CD8-positive, alpha-beta T cell (primary cell): ENCODE measurements at regions of chr20 and their contacts with region 1.

Region 1: DNA sequence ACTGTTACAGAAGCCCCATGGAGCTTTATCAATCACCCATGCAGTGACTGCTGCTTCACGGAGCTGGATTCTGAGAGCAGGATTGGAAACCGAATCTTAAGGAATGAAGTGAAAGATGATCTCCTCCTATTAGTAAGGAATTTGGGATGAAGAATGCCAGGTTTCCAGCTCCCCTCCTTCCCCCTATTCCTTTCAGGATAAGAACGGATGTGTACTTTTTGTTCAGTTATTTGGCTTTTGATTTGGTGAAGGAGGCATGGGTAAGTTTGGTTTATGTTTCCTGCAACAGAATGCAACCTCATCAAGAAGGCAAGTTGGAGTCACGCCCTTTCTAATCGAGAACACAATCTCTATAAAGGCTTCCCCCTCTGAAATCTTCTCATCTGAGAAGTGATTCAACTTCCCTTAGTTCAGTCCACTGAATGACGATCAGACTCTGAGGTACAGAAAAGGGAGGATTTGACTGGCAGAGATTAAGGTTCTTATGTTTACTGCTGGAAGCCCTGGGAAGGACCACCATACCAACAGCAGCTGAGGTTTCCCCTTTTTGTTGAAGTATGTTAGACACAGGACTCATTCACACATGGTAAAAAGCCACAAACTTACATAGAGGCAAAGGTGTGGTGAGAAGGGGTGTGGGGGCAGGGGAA is 5.5 kb downstream of the ELMO2 start:
- DNase-seq: peak in 7 of 9 experiments; percentile 7 to 89 (median 51)
- ATAC-seq: peak; percentile 84
- H3K4me3 ChIP-seq: peak overlapping the region; percentile 2 to 27
- H3K4me3 Mint-ChIP-seq: peak overlapping the region; percentile 70
- H3K27ac ChIP-seq: peak overlapping the region; percentile 53 to 87
- H3K27ac Mint-ChIP-seq: peak overlapping the region; percentile 92
- H3K4me1 ChIP-seq: peaks cover 67% of the 10 kb centered on the region
- H3K4me1 Mint-ChIP-seq: peaks cover 75% of the 10 kb centered on the region
- H3K27me3 ChIP-seq: no peaks in the 10 kb centered on the region
- H3K27me3 Mint-ChIP-seq: no peaks in the 10 kb centered on the region
- CTCF ChIP-seq: no peak

Region 2: GRCh38 chr20:46388937-46389336 is 12.0 kb before region 1 on chr20:
- CTCF ChIA-PET with region 1: no interaction called
- POLR2A ChIA-PET with region 1: no interaction called
- intact Hi-C with region 1: loop called in 1 of 2 experiments (anchors 2 kb)
- DNase-seq: no peak
- ATAC-seq: no peak
- H3K4me3 ChIP-seq: no peak overlapping the region
- H3K4me3 Mint-ChIP-seq: no peak overlapping the region
- H3K27ac ChIP-seq: no peak overlapping the region
- H3K27ac Mint-ChIP-seq: no peak overlapping the region
- H3K4me1 ChIP-seq: no peaks in the 10 kb centered on the region
- H3K4me1 Mint-ChIP-seq: no peaks in the 10 kb centered on the region
- H3K27me3 ChIP-seq: no peaks in the 10 kb centered on the region
- H3K27me3 Mint-ChIP-seq: no peaks in the 10 kb centered on the region
- CTCF ChIP-seq: no peak

Region 3: GRCh38 chr20:46411637-46412036 is 10.7 kb after region 1 on chr20:
- CTCF ChIA-PET with region 1: interaction called, 7 read pairs
- POLR2A ChIA-PET with region 1: no interaction called
- intact Hi-C with region 1: loop called in 1 of 2 experiments (anchors 1 kb)
- DNase-seq: no peak
- ATAC-seq: no peak
- H3K4me3 ChIP-seq: no peak overlapping the region
- H3K4me3 Mint-ChIP-seq: no peak overlapping the region
- H3K27ac ChIP-seq: no peak overlapping the region
- H3K27ac Mint-ChIP-seq: no peak overlapping the region
- H3K4me1 ChIP-seq: peaks cover 13% of the 10 kb centered on the region
- H3K4me1 Mint-ChIP-seq: peaks cover 28% of the 10 kb centered on the region
- H3K27me3 ChIP-seq: no peaks in the 10 kb centered on the region
- H3K27me3 Mint-ChIP-seq: peaks cover 20% of the 10 kb centered on the region
- CTCF ChIP-seq: no peak

Region 4: GRCh38 chr20:47019121-47019824 is 618.3 kb after region 1 on chr20:
- CTCF ChIA-PET with region 1: no interaction called
- POLR2A ChIA-PET with region 1: no interaction called
- intact Hi-C with region 1: no loop called
- DNase-seq: no peak
- ATAC-seq: no peak
- H3K4me3 ChIP-seq: no peak overlapping the region
- H3K4me3 Mint-ChIP-seq: no peak overlapping the region
- H3K27ac ChIP-seq: no peak overlapping the region
- H3K27ac Mint-ChIP-seq: no peak overlapping the region
- H3K4me1 ChIP-seq: no peaks in the 10 kb centered on the region
- H3K4me1 Mint-ChIP-seq: no peaks in the 10 kb centered on the region
- H3K27me3 ChIP-seq: no peaks in the 10 kb centered on the region
- H3K27me3 Mint-ChIP-seq: peaks cover 8% of the 10 kb centered on the region
- CTCF ChIP-seq: no peak